PC-9 (cell line): ENCODE measurements at regions of chr4 and their contacts with region 1.

Region 1: GRCh38 chr4:13907255-13907751 is 279.8 kb upstream of the BOD1L1 start:
- DNase-seq: peak; percentile 63 to 99
- H3K4me3 ChIP-seq: no peak overlapping the region
- H3K27ac ChIP-seq: peak overlapping the region; percentile 94
- H3K4me1 ChIP-seq: peaks cover 25% of the 10 kb centered on the region
- H3K27me3 ChIP-seq: no peaks in the 10 kb centered on the region
- CTCF ChIP-seq: peak; percentile 61

Region 2: GRCh38 chr4:13888112-13888511 is 19.2 kb before region 1 on chr4:
- CTCF ChIA-PET with region 1: interaction called, 4 read pairs
- POLR2A ChIA-PET with region 1: no interaction called
- intact Hi-C with region 1: loop called (anchors 2 kb)
- DNase-seq: peak; percentile 26 to 82
- H3K4me3 ChIP-seq: no peak overlapping the region
- H3K27ac ChIP-seq: peak overlapping the region; percentile 78
- H3K4me1 ChIP-seq: peaks cover 37% of the 10 kb centered on the region
- H3K27me3 ChIP-seq: no peaks in the 10 kb centered on the region
- CTCF ChIP-seq: no peak

Region 3: GRCh38 chr4:13988353-13989305 is 81.3 kb after region 1 on chr4:
- CTCF ChIA-PET with region 1: interaction called, 3 read pairs
- POLR2A ChIA-PET with region 1: interaction called, 3 read pairs
- intact Hi-C with region 1: loop called (anchors 1 kb)
- DNase-seq: peak; percentile 31 to 84
- H3K4me3 ChIP-seq: peak overlapping the region; percentile 10; the same call in 1 of the 2 replicates
- H3K27ac ChIP-seq: peak overlapping the region; percentile 93
- H3K4me1 ChIP-seq: peaks cover 39% of the 10 kb centered on the region
- H3K27me3 ChIP-seq: no peaks in the 10 kb centered on the region
- CTCF ChIP-seq: no peak

Region 4: GRCh38 chr4:14254252-14254651 is 346.9 kb after region 1 on chr4:
- CTCF ChIA-PET with region 1: no interaction called
- POLR2A ChIA-PET with region 1: no interaction called
- intact Hi-C with region 1: loop called (anchors 10 kb)
- DNase-seq: peak in 1 of 2 experiments; percentile 7
- H3K4me3 ChIP-seq: no peak overlapping the region
- H3K27ac ChIP-seq: no peak overlapping the region
- H3K4me1 ChIP-seq: no peaks in the 10 kb centered on the region
- H3K27me3 ChIP-seq: no peaks in the 10 kb centered on the region
- CTCF ChIP-seq: peak; percentile 53